Psoas muscle (tissue), 8 donors: ENCODE measurements at regions of chr18 and their contacts with region 1.

Region 1: GRCh38 chr18:49813319-49814146 is at the start of gene ACAA2:
- DNase-seq: peak; percentile 90 to 94
- ATAC-seq: peak; percentile 94 to 97 (median 95)
- H3K4me3 ChIP-seq: peak within 1 kb of the TSS; percentile 85
- H3K27ac ChIP-seq: peak within 1 kb of the TSS; percentile 93
- H3K4me1 ChIP-seq: peaks cover 12% of the 10 kb centered on the region
- H3K27me3 ChIP-seq: no peaks in the 10 kb centered on the region
- CTCF ChIP-seq: no peak
- total RNA-seq, gene ACAA2: 75.5 to 158 (median 99.8) TPM

Region 2: GRCh38 chr18:49491857-49492693 is 321.5 kb before region 1 on chr18:
- intact Hi-C with region 1: loop called in 1 of 2 experiments (anchors 10 kb)
- DNase-seq: peak; percentile 82 to 83
- ATAC-seq: peak; percentile 92 to 97 (median 93)
- H3K4me3 ChIP-seq: peak within 1 kb of the TSS; percentile 90
- H3K27ac ChIP-seq: peak within 1 kb of the TSS; percentile 94
- H3K4me1 ChIP-seq: peaks cover 28% of the 10 kb centered on the region
- H3K27me3 ChIP-seq: no peaks in the 10 kb centered on the region
- CTCF ChIP-seq: no peak

Region 3: GRCh38 chr18:50277935-50278334 is 464.4 kb after region 1 on chr18:
- intact Hi-C with region 1: loop called in 1 of 2 experiments (anchors 10 kb)
- DNase-seq: no peak
- ATAC-seq: no peak
- H3K4me3 ChIP-seq: no peak overlapping the region
- H3K27ac ChIP-seq: no peak overlapping the region
- H3K4me1 ChIP-seq: peaks cover 20% of the 10 kb centered on the region
- H3K27me3 ChIP-seq: no peaks in the 10 kb centered on the region
- CTCF ChIP-seq: no peak